ENCODE measurements at regions of chr12 and their contacts with region 1.

Region 1: GRCh38 chr12:1093166-1093751 is 102.2 kb downstream of the ERC1 start:
- DNase-seq: peak; percentile 67
- H3K4me3 ChIP-seq: no peak overlapping the region
- H3K27ac ChIP-seq: no peak overlapping the region
- H3K4me1 ChIP-seq: peaks cover 11% of the 10 kb centered on the region; the same call in 1 of the 2 replicates
- H3K27me3 ChIP-seq: no peaks in the 10 kb centered on the region

Region 2: GRCh38 chr12:936377-937345 is 156.6 kb before region 1 on chr12:
- in situ Hi-C with region 1: loop called (anchors 10 kb)
- DNase-seq: no peak
- H3K4me3 ChIP-seq: no peak overlapping the region
- H3K27ac ChIP-seq: no peak overlapping the region
- H3K4me1 ChIP-seq: no peaks in the 10 kb centered on the region
- H3K27me3 ChIP-seq: no peaks in the 10 kb centered on the region